ENCODE measurements at regions of chr12 and their contacts with region 1.

Region 1: GRCh38 chr12:57899010-57899662 is 42.2 kb upstream of the ATP23 start:
- DNase-seq: peak; percentile 96
- ATAC-seq: peak; percentile 93
- H3K4me3 Mint-ChIP-seq: peak overlapping the region; percentile 61
- H3K27ac Mint-ChIP-seq: peak overlapping the region; percentile 100
- H3K4me1 Mint-ChIP-seq: peaks cover 53% of the 10 kb centered on the region
- H3K27me3 Mint-ChIP-seq: no peaks in the 10 kb centered on the region
- CTCF ChIP-seq: no peak

Region 2: GRCh38 chr12:57836442-57837375 is 62.4 kb before region 1 on chr12:
- CTCF ChIA-PET with region 1: interaction called, 96 read pairs
- POLR2A ChIA-PET with region 1: interaction called, 26 read pairs
- intact Hi-C with region 1: no loop called
- DNase-seq: peak; percentile 79
- ATAC-seq: peak; percentile 70
- H3K4me3 Mint-ChIP-seq: peak overlapping the region; percentile 62
- H3K27ac Mint-ChIP-seq: peak overlapping the region; percentile 91
- H3K4me1 Mint-ChIP-seq: peaks cover 90% of the 10 kb centered on the region
- H3K27me3 Mint-ChIP-seq: no peaks in the 10 kb centered on the region
- CTCF ChIP-seq: no peak

Region 3: DNA sequence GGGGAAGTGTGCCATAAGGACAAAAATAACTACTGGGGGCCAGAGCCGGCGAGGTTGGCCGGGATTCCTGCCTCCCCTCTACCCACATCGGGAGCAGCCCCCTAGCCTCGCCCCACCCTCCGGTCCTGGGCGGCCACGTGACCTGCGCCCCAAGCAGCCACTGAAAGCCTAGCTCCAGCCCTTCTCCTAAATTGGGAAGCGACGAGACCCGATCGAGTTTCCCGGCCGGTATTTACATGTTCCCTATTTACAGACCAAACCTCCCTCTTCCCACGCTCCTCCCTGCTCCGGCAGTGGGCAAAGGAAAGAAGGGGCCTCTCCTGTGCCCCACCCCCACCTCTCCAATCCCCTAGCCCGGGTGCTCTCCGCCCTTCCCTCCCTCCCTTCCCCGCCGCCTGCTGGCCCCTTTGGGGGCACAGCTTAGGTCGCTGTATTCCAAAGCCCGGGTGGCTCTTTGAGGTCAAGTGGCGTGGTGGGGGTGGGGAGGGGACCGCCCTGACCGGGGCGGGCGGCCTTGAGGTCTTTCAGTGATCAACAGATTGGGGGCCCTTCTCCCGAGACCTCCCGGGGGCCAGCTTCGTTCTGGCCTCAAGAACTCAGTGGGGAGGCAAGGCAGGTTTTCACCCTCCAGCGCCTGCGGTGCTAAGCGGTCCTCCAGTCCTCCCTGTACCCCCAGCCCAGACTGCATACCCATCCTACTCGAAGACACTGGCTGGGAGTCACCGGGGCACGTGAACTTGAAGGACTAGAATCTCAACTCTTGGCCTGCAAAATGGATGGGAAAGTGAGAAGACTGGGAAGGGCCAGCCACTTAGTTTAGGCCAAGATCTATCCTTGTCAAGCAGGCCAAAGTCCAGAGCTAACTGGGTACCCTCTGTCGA is 46.3 kb before region 1 on chr12:
- CTCF ChIA-PET with region 1: interaction called, 61 read pairs
- POLR2A ChIA-PET with region 1: interaction called, 70 read pairs
- intact Hi-C with region 1: no loop called
- DNase-seq: no peak
- ATAC-seq: no peak
- H3K4me3 Mint-ChIP-seq: peak overlapping the region; percentile 23
- H3K27ac Mint-ChIP-seq: no peak overlapping the region
- H3K4me1 Mint-ChIP-seq: peaks cover 35% of the 10 kb centered on the region
- H3K27me3 Mint-ChIP-seq: peaks cover 18% of the 10 kb centered on the region
- CTCF ChIP-seq: no peak

Region 4: DNA sequence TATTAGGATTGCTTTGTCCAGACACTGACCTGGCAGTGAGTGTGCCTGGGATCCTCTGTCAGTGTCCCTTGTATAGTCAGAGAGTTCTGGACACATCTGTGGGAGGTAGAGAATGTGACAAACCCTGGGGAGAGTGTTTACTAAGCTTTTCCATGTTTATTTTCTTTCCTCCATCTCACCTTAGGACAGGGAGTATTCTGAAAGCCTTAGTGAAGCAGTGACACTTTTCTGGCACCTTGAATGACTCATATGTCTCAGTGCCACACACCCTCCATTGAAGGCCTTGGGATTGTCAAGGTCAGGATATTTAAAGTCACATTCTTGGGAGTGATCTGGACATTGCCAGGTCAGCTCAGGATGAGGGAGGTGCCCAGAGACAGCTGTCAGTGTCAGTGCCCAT is 17.7 kb before region 1 on chr12:
- CTCF ChIA-PET with region 1: interaction called, 13 read pairs
- POLR2A ChIA-PET with region 1: interaction called, 25 read pairs
- intact Hi-C with region 1: no loop called
- DNase-seq: no peak
- ATAC-seq: no peak
- H3K4me3 Mint-ChIP-seq: no peak overlapping the region
- H3K27ac Mint-ChIP-seq: no peak overlapping the region
- H3K4me1 Mint-ChIP-seq: peaks cover 3% of the 10 kb centered on the region
- H3K27me3 Mint-ChIP-seq: peaks cover 3% of the 10 kb centered on the region
- CTCF ChIP-seq: no peak

Region 5: DNA sequence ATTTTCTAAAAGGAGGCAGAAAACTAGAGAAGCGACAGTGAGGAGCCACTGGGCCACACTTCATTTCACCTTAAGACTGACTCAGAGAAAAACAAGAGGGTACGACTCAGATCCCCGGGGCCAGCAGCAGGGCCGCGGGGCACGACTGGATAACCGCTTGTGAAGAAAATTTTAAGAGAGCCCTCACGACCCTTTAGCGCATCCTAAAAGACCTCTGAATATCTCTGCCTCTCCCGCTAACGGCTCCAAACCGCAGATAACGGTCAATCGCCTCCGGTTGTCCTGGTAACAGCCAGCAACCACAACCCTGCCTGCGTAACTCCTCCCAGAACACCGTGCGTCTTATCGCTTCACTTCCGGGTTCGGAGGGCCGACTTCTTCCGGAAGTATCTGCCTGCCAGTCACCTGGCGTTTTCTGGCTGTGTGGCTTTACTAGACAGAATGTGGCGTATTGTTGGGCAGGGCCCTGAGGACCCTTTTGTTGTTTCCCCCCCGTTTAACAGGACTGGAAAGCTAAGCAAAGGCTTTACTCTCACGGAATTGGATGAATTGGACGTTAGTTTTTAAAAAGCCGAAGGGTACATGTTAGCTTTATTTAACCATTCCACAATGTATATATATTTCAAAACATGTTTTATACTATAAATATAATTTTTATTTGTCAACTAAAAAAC is 36.8 kb after region 1 on chr12:
- CTCF ChIA-PET with region 1: interaction called, 6 read pairs
- POLR2A ChIA-PET with region 1: interaction called, 4 read pairs
- intact Hi-C with region 1: loop called (anchors 5 kb)
- DNase-seq: peak; percentile 96
- ATAC-seq: peak; percentile 91
- H3K4me3 Mint-ChIP-seq: peak overlapping the region; percentile 93
- H3K27ac Mint-ChIP-seq: peak overlapping the region; percentile 97
- H3K4me1 Mint-ChIP-seq: peaks cover 34% of the 10 kb centered on the region
- H3K27me3 Mint-ChIP-seq: no peaks in the 10 kb centered on the region
- CTCF ChIP-seq: no peak

Region 6: GRCh38 chr12:58310828-58311622 is 411.9 kb after region 1 on chr12:
- CTCF ChIA-PET with region 1: no interaction called
- POLR2A ChIA-PET with region 1: no interaction called
- intact Hi-C with region 1: no loop called
- DNase-seq: no peak
- ATAC-seq: no peak
- H3K4me3 Mint-ChIP-seq: no peak overlapping the region
- H3K27ac Mint-ChIP-seq: no peak overlapping the region
- H3K4me1 Mint-ChIP-seq: no peaks in the 10 kb centered on the region
- H3K27me3 Mint-ChIP-seq: peaks cover 2% of the 10 kb centered on the region
- CTCF ChIP-seq: no peak

Region 7: GRCh38 chr12:59149997-59150642 is 1251.0 kb after region 1 on chr12:
- CTCF ChIA-PET with region 1: no interaction called
- POLR2A ChIA-PET with region 1: no interaction called
- intact Hi-C with region 1: no loop called
- DNase-seq: peak; percentile 5
- ATAC-seq: peak; percentile 77
- H3K4me3 Mint-ChIP-seq: no peak overlapping the region
- H3K27ac Mint-ChIP-seq: no peak overlapping the region
- H3K4me1 Mint-ChIP-seq: no peaks in the 10 kb centered on the region
- H3K27me3 Mint-ChIP-seq: no peaks in the 10 kb centered on the region
- CTCF ChIP-seq: peak; percentile 77

Measured in activated CD8-positive, alpha-beta T cell treated with anti-CD3 and anti-CD28 coated beads for 36 hours (primary cell).